BJ (cell line): ENCODE measurements at regions of chr3 and their contacts with region 1.

Region 1: GRCh38 chr3:179739816-179740594 is 87.2 kb downstream of the USP13 start:
- DNase-seq: no peak
- H3K4me3 ChIP-seq: no peak overlapping the region
- H3K27me3 ChIP-seq: no peaks in the 10 kb centered on the region
- CTCF ChIP-seq: no peak

Region 2: GRCh38 chr3:179750720-179751328 is 10.8 kb after region 1 on chr3:
- CTCF ChIA-PET with region 1: interaction called, 16 read pairs
- POLR2A ChIA-PET with region 1: no interaction called
- DNase-seq: no peak
- H3K4me3 ChIP-seq: no peak overlapping the region
- H3K27me3 ChIP-seq: no peaks in the 10 kb centered on the region
- CTCF ChIP-seq: peak; percentile 63

Region 3: DNA sequence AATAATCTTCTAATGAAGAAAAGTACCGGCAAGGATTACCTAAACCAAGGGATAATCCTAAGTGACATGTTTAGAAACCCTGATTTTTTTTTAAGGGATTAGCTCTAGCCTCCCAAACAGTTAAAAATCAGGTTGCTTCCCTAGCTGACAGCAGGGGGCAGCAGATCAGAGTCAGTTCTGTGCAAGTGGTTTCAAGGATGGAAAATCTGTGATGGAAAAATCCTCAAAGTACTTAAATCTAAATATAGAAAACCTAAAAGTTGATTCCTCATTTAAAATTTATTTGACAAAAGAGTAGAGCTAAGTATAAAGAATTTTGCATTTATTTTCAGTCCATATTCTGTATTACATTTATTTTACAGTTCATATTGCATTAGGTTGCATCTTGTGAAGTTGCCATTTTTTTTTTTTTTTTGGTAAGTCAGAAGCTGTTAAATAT is 189.1 kb after region 1 on chr3:
- CTCF ChIA-PET with region 1: no interaction called
- POLR2A ChIA-PET with region 1: no interaction called
- DNase-seq: no peak
- H3K4me3 ChIP-seq: no peak overlapping the region
- H3K27me3 ChIP-seq: no peaks in the 10 kb centered on the region; the same call in 1 of the 2 replicates
- CTCF ChIP-seq: peak; percentile 82

Region 4: DNA sequence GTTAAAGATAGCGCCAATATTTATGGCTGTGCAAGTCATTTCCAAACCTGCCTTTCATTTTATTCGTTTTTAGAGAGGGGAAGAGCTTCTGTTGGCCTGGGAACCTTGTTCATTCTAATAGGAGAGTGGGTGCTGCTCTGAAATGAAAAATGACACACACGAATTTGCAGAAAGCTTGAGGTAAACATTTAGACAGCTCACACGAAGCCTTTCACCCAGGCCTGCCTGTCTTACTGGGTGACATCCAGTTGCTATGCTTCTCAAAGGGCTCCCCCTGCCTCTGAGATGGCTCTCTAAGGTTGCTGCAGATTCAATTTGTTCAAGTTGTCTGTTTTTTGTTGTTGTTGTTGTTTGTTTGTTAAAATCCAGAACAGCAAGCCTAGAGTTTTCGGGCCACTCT is 278.5 kb after region 1 on chr3:
- CTCF ChIA-PET with region 1: no interaction called
- POLR2A ChIA-PET with region 1: no interaction called
- DNase-seq: no peak
- H3K4me3 ChIP-seq: no peak overlapping the region
- H3K27me3 ChIP-seq: no peaks in the 10 kb centered on the region
- CTCF ChIP-seq: no peak